ENCODE measurements at regions of chr12 and their contacts with region 1.

Region 1: GRCh38 chr12:95582230-95583058 is 31.2 kb upstream of the USP44 start:
- DNase-seq: peak; percentile 73
- H3K4me3 ChIP-seq: no peak overlapping the region
- H3K27ac ChIP-seq: no peak overlapping the region
- H3K4me1 ChIP-seq: no peaks in the 10 kb centered on the region
- H3K27me3 ChIP-seq: no peaks in the 10 kb centered on the region
- CTCF ChIP-seq: peak; percentile 68

Region 2: DNA sequence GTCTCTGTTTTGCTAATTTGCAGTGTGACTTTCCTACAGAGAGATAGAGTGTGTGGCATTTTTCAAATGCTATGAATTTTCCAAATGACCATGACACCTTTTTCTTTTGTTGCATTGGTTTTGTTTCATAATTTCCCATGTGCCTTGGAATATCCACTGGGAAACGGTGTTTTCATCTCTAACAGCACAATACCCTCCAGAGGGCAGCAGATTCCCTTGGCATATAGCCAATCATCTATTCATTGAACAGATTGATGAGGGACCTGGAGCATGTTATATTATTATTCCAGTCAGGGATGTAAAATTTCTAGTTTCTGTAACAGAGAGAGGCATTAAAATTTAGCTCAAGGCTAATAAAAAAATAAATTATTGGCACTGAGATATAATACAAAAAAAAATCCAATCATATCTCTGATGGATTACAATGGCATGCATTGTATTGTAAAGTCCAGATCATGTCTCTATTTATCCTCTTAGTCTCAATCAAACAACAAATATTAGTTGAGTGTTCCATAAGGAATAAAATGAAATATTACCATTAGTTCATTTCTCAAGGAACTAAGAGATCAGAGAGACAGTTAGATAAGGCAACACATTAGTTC is 237.8 kb after region 1 on chr12:
- CTCF ChIA-PET with region 1: interaction called, 3 read pairs
- POLR2A ChIA-PET with region 1: no interaction called
- intact Hi-C with region 1: loop called (anchors 1 kb)
- DNase-seq: peak; percentile 80
- H3K4me3 ChIP-seq: no peak overlapping the region
- H3K27ac ChIP-seq: no peak overlapping the region
- H3K4me1 ChIP-seq: peaks cover 25% of the 10 kb centered on the region
- H3K27me3 ChIP-seq: no peaks in the 10 kb centered on the region
- CTCF ChIP-seq: peak; percentile 70

Region 3: DNA sequence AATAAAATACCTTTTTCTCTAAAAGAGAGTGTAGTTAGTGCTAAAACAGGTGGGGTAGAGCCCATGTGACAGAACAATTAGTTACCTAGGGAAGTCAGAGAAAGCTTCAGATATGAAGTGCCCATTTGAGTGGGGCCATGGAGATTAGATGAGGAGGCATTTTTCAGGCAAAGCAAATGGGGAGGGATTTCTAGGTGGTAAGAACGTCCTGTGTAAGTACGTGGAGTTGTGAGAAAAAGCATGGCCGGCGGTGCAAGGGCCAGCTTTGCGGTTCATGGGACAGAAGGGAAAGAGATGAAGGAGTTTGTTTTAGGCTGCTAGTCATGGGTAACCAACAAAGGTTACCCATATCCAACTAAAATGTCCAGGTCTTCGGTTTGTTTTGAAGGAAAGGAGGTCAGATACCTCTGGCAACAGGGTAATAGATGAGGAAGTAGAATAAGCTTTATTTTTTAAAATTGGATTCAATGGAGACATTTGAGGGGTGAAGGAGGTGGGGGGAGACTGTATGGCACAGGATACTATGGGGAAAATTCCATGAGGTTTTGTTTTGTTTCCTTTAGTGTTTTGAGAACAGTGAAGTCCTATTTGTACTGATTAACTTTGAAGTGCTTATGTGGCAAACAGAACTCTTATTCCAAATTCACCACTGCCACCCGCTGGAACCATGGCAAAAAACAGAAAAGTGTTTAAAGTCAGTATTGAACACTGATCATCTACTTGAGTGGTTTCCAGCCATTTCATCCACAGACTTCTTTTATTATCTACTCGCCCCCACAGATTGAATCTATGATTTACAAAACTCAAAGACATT is 266.3 kb after region 1 on chr12:
- CTCF ChIA-PET with region 1: no interaction called
- POLR2A ChIA-PET with region 1: no interaction called
- intact Hi-C with region 1: loop called (anchors 5 kb)
- DNase-seq: peak; percentile 76
- H3K4me3 ChIP-seq: no peak overlapping the region
- H3K27ac ChIP-seq: no peak overlapping the region
- H3K4me1 ChIP-seq: peaks cover 9% of the 10 kb centered on the region
- H3K27me3 ChIP-seq: no peaks in the 10 kb centered on the region
- CTCF ChIP-seq: peak; percentile 65

Region 4: DNA sequence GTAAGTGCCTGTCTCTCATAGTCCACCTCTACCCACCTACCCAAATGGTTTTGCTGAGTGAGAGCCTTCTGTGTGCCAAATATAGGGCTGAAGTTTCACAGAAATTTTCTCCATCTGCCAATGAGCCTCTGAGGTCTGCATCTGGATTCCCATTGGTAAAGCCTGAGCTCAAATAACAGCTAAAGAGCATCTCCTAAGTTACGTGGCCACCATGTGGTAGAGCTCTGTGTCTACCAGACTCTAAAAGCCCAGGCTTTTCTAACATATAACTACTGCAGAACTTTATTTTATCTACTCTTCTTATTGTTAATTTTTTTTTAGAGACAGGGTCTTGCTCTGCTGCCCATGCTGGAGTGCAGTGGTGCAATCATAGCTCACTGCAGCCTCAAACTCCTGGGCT is 376.7 kb after region 1 on chr12:
- CTCF ChIA-PET with region 1: interaction called, 4 read pairs
- POLR2A ChIA-PET with region 1: no interaction called
- intact Hi-C with region 1: loop called (anchors 10 kb)
- DNase-seq: peak; percentile 62
- H3K4me3 ChIP-seq: no peak overlapping the region
- H3K27ac ChIP-seq: no peak overlapping the region
- H3K4me1 ChIP-seq: no peaks in the 10 kb centered on the region
- H3K27me3 ChIP-seq: no peaks in the 10 kb centered on the region
- CTCF ChIP-seq: peak; percentile 52

Region 5: GRCh38 chr12:95998611-95999286 is 416.3 kb after region 1 on chr12:
- CTCF ChIA-PET with region 1: no interaction called
- POLR2A ChIA-PET with region 1: no interaction called
- intact Hi-C with region 1: loop called (anchors 1 kb)
- DNase-seq: peak; percentile 74
- H3K4me3 ChIP-seq: no peak overlapping the region
- H3K27ac ChIP-seq: no peak overlapping the region
- H3K4me1 ChIP-seq: no peaks in the 10 kb centered on the region
- H3K27me3 ChIP-seq: no peaks in the 10 kb centered on the region
- CTCF ChIP-seq: peak; percentile 85

Measured in A673 (cell line).